Prostate gland (tissue), 2 donors: ENCODE measurements at regions of chr10 and their contacts with region 1.

Region 1: DNA sequence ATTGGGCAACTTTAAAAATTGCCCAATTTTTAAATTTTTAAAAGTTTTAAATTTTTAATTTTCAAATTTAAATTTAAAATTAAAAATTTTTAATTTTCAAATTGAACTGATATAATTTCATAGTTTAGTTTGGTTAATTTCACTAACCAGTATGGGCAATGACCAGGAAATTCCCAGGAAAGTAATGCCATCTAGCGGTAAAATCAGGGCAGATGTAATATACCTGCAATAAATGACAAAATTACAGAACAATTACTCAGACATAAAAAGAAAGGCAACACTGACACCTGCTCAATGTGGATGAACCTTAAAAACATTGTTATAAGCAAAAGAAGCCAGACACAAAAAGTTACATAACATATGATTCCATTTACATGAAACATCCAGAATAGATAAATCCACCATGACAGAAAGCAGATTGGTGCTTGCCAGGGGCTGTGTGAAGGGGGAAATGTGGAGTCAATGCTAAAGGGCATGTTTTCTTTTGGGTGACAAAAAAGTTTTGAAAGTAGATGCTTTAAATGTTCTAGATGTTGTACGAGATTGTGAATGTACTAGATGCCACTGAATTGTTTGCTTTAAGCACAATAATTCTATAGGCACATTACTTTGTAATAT is 28.6 kb upstream of the SLC16A12 start:
- DNase-seq: peak; percentile 22
- H3K4me3 ChIP-seq: no peak overlapping the region
- H3K27ac ChIP-seq: no peak overlapping the region
- H3K4me1 ChIP-seq: no peaks in the 10 kb centered on the region
- H3K27me3 ChIP-seq: no peaks in the 10 kb centered on the region
- CTCF ChIP-seq: peak; percentile 5 to 88 (median 78)
- POLR2A ChIP-seq: no peak

Region 2: DNA sequence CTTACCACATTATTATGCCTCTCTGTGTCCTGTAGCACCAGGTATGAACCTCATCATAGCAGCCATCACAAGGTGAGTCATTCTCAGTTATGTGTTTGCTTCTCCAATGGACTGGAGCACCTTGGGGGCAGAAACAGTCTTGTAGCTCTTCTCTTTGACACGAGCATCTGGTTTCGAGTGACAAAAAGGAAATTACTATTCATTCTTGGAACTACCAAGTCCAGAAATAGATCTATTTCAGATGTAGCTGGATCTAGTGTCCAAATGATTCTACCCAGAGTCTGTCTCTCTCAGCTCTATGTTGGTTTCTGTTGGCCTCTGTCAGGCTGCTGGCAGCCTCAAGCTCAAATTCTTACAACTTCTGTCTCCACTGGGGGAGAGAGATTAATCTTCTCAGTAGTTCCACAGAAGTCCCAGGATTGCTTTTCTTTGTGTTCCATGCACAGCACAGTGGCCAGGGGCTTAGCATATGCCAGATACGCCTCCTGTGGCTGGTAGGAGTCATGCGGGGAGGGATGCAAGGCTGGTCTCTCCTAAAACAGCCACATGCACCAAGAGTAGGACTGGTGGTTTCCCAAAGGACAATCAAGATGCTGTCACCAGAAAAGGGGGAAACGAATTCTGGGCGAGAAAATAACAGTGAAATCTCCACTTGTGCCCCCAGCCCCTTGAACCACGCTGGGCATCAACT is 1941.5 kb before region 1 on chr10:
- intact Hi-C with region 1: no loop called
- DNase-seq: no peak
- H3K4me3 ChIP-seq: no peak overlapping the region
- H3K27ac ChIP-seq: no peak overlapping the region
- H3K4me1 ChIP-seq: no peaks in the 10 kb centered on the region
- H3K27me3 ChIP-seq: no peaks in the 10 kb centered on the region
- CTCF ChIP-seq: no peak
- POLR2A ChIP-seq: no peak

Region 3: GRCh38 chr10:89251409-89252224 is 312.4 kb before region 1 on chr10 and contains the start of gene LIPA:
- intact Hi-C with region 1: loop called (anchors 10 kb)
- DNase-seq: peak; percentile 96
- H3K4me3 ChIP-seq: peak within 1 kb of the TSS; percentile 60 to 80
- H3K27ac ChIP-seq: peak within 1 kb of the TSS; percentile 66 to 70
- H3K4me1 ChIP-seq: no peaks in the 10 kb centered on the region
- H3K27me3 ChIP-seq: no peaks in the 10 kb centered on the region
- CTCF ChIP-seq: no peak
- POLR2A ChIP-seq: peak; percentile 61
- total RNA-seq, gene LIPA: 25.6 to 37.2 TPM

Region 4: DNA sequence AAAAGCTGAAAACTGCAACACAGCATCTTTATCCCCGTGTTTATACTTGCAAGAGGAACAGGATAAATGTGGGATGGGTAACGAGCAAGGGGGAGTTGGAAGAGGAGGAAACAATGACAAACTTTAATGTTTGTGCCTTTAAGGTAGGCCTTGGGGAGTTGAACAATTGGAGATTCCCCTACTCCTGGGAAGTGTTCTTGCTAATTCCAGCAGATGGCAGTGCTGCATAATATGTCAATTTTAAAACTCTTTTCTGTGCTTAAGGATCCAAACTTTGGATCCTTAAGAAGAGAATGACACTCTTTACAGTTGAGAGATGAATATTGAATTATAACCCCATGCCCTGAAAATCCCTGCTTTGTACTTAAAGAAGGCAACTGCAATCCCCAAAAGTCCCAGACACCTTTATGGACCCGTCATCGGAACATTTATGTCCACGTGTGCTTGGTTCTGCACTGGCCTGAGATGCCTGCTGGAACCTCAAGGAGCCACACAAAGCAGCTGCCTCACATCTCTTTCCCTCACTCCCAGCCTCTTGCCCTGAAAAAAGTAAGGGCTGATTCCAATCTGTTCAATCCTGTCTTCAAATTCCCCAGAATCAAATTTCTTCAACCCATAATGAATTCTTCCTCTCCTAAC is 137.6 kb before region 1 on chr10:
- intact Hi-C with region 1: loop called (anchors 1 kb)
- DNase-seq: no peak
- H3K4me3 ChIP-seq: no peak overlapping the region
- H3K27ac ChIP-seq: no peak overlapping the region
- H3K4me1 ChIP-seq: no peaks in the 10 kb centered on the region
- H3K27me3 ChIP-seq: no peaks in the 10 kb centered on the region
- CTCF ChIP-seq: peak; percentile 56 to 80 (median 78)
- POLR2A ChIP-seq: no peak

Region 5: DNA sequence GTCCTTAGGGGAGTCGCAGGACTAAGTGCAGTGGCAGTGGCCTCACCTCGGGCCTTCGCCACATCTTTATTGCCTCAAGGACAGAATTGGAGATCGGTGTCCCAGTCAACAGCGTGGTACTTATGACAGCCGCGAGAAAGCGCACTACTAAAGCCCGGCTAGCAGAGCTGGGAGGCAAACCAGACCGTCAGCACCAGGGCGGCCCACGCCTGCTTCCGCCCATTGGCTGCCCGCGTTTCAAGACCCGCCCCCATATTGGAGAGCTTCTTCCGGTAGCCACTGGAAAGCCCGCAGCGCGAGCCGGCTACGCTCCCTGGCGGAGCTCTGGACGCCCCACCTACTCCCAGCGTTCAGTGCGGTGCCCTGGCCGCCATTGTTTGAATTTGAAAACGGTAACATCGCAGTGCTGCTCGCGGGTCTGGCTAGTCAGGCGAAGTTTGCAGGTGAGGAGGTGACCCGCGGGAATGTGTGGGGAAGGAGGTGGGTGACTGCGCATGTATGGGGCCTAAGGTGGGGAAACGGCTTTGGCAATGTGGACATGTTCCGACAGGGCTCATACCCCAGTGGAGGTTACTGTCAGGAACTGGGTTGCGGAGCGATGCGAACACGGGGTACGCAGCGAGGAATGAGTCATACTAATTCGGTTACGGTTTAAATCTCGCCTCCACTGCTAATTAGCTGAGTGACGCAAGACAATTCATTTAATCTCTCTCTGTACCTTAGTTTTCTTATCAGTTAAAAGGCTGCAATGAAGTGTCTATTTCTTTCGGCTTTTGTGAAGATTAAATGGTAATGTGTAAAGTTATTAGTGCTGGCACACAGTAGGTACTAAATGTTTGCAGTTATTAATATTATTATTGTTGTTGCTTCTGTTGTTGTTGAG is 137.5 kb after region 1 on chr10 and contains the start of gene KIF20B:
- intact Hi-C with region 1: no loop called
- DNase-seq: peak; percentile 95
- H3K4me3 ChIP-seq: peak within 1 kb of the TSS; percentile 54 to 57
- H3K27ac ChIP-seq: peak within 1 kb of the TSS; percentile 70 to 83
- H3K4me1 ChIP-seq: no peaks in the 10 kb centered on the region
- H3K27me3 ChIP-seq: no peaks in the 10 kb centered on the region
- CTCF ChIP-seq: peak in 3 of 4 experiments; percentile 58 to 60 (median 58)
- POLR2A ChIP-seq: peak; percentile 52
- total RNA-seq, gene KIF20B: 3.4 to 5.7 TPM

Region 6: DNA sequence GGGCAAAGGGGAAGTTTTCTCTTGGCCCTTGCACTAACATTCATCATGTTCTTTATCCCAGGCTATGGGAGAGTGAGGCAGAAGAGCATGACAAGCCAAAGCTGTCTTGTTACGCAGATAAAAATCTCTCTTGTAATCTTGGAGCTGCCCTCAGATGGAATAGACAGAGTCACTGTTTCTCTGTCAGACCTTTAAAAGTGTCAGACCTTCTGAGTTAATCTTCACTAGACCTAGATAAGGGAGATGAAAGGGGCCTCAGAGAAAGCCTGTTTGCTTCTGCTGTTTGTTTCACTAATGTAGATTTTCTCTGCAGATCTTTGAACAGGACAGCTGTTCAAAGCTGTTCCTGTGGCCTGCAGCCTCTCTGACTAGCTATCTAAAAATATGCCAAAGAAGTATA is 250.3 kb after region 1 on chr10:
- intact Hi-C with region 1: no loop called
- DNase-seq: no peak
- H3K4me3 ChIP-seq: no peak overlapping the region
- H3K27ac ChIP-seq: no peak overlapping the region
- H3K4me1 ChIP-seq: no peaks in the 10 kb centered on the region
- H3K27me3 ChIP-seq: no peaks in the 10 kb centered on the region
- CTCF ChIP-seq: no peak
- POLR2A ChIP-seq: no peak